GM10248 (cell line): ENCODE measurements at regions of chr11 and their contacts with region 1.

Region 1: GRCh38 chr11:73779084-73779902 is 8.4 kb upstream of the MRPL48 start:
- DNase-seq: peak; percentile 97
- CTCF ChIP-seq: no peak

Region 2: DNA sequence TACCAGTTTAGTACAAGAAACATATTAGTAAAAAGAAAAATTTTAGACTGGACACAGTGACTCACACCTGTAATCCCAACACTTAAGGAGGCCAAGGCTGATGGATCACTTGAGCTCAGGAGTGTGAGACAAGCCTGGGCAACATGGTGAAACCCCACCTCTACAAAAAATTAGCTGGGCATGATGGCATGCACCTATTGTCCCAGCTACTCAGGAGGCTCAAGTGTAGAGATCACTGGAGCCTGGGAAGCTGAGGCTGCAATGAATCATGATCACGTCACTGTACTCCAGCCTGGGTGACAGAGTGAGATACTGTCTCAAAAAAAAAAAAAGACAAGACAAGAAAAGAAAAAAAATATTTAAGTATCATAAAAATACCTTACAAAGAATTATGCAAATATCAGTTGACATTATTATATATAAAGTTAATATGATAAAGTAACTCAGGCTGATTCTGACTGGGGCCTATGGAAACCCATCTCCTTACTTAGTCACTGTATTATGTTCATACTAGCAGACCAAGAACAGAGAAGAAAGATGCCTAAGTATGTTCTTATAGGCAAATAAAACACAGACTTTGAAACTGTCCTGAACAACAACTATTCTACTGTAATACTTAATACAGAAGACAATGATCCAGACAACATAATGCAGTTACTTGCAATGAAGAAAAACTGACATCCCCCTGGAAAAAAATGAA is 208.7 kb before region 1 on chr11:
- CTCF ChIA-PET with region 1: no interaction called
- POLR2A ChIA-PET with region 1: no interaction called
- DNase-seq: no peak
- CTCF ChIP-seq: no peak

Region 3: DNA sequence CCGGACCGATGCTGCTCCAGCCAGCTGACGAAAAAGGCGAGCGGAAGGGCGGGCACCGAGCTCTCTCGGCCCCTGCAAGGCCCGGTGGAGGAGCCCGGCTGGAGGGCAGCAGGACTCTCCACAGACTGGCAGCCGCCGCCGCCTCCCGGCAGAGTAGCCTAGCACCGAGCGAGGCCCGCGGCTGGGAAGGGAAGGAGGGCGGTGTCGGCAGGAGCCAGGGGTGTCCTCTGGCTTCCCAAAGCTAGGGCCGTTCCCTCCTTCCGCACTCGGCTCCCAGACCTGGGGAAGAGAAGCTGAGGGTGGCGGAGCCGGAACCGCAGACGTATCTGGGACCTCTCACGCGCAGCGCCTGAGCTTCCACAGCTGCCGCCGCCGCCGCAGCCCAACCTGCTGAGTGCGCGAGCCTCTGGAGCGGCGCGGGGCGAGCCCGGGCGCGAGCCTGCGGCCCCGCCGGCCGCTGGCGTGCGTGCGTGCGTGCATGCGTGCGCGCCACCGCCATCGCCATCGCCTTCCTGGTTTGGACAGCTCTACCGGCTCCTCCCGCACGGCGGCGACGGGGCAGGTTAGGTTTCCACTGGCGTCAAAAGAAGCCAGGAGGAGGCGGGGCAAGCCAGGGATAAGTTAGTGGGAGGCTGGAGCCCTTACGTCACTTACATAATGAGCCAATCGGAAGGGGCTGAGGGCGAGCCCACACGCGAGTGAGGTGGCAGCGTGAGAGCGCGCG is 18.5 kb before region 1 on chr11 and contains the start of gene RAB6A:
- CTCF ChIA-PET with region 1: interaction called, 50 read pairs
- POLR2A ChIA-PET with region 1: interaction called, 18 read pairs
- DNase-seq: peak; percentile 98
- CTCF ChIP-seq: peak; percentile 34

Region 4: DNA sequence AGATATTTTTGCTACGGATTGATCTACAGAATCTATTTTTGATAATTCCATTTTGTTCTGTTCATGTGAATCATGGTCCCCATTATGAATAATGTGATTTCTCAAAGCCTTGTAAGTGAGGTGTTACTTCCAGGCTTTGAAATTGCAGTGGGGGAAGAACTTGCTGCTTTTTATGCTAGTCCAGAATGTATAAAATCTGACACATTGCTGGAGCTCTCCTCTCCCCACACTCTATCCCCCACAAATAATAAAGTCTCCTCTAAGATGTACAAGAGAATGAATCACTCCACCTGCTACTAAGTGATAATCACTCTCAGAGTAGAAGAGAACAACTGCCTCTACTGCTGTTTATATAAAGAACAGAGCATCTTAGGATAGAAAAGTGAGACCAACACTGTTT is 12.5 kb before region 1 on chr11:
- CTCF ChIA-PET with region 1: interaction called, 50 read pairs
- POLR2A ChIA-PET with region 1: interaction called, 18 read pairs
- DNase-seq: no peak
- CTCF ChIP-seq: no peak

Region 5: GRCh38 chr11:73995247-73995646 is 216.0 kb after region 1 on chr11:
- CTCF ChIA-PET with region 1: no interaction called
- POLR2A ChIA-PET with region 1: no interaction called
- DNase-seq: no peak
- CTCF ChIP-seq: no peak

Region 6: DNA sequence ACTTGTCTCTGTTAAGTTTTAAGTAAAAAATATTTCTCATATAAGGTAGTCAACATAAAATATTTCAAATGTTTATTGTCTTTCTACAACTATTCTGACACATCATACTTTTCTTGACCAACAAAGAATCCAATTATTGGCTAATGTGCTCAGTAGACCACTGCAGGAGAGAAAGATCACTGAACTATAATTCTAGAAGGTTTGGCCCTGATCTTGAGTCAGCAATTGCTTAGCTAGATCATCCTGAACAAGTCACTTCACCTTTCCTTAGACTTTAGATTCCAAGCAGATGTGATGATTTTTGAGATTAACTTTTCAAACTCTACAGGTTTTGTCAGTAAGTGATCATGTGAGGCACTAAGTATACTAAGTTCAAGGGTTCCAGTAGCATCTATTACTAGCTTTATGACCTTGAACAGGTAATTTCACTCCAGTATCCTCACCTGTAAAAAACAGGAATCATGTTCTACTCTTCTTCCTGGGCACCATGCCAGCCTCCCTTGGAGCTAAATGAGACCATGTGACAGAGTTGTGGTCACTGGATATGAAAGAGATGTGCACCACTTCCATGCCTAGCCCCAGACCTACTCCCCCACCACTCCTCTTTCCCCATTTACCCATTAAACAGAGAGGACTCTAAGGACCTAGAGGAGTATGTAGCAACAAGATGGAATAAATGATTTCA is 601.6 kb after region 1 on chr11:
- CTCF ChIA-PET with region 1: no interaction called
- POLR2A ChIA-PET with region 1: no interaction called
- DNase-seq: no peak
- CTCF ChIP-seq: no peak